ENCODE measurements at regions of chr13 and their contacts with region 1.

Region 1: GRCh38 chr13:113029487-113030258 is 60.7 kb downstream of the MCF2L start:
- DNase-seq: peak in 1 of 2 experiments; percentile 97
- H3K4me3 ChIP-seq: no peak overlapping the region
- H3K27ac ChIP-seq: no peak overlapping the region
- H3K4me1 ChIP-seq: peaks cover 0 to 3% (median 0%) of the 10 kb centered on the region in 4 experiments; a peak in 2 of 7 replicates
- H3K27me3 ChIP-seq: no peaks in the 10 kb centered on the region
- CTCF ChIP-seq: peak in 2 of 3 experiments; percentile 89 to 96; a peak in 3 of 4 replicates
- EP300 ChIP-seq: no peak
- POLR2A ChIP-seq: no peak
- RAD21 ChIP-seq: peak; percentile 85 to 90

Region 2: DNA sequence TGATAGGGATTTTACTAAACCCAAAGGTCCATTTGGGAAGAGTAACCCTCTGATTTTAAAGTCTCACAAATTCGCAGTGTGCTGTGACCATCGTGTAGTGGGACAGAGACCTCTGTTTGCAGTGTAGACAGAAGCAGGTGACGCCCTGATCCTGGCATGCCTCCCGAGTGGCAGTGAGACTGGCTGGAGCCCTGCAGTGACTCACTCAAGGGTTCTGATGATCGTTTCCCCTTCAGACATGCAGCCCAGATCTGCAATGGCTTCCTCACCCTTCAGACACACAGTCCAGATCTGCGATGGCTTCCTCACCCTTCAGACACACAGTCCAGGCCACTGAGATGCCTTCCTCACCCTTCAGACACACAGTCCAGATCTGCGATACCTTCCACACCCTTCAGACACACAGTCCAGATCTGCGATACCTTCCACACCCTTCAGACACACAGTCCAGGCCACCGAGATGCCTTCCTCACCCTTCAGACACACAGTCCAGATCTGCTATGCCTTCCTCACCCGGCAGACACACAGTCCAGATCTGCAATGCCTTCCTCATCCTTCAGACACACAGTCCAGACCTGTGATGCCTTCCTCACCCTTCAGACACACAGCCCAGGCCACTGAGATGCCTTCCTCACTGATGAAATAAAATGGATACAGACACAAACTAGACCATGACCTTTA is 214.6 kb before region 1 on chr13:
- CTCF ChIA-PET with region 1: no interaction called
- POLR2A ChIA-PET with region 1: no interaction called
- DNase-seq: no peak
- H3K4me3 ChIP-seq: no peak overlapping the region
- H3K27ac ChIP-seq: no peak overlapping the region
- H3K4me1 ChIP-seq: no peaks in the 10 kb centered on the region
- H3K27me3 ChIP-seq: no peaks in the 10 kb centered on the region
- CTCF ChIP-seq: no peak
- EP300 ChIP-seq: no peak
- POLR2A ChIP-seq: no peak
- RAD21 ChIP-seq: no peak

Region 3: DNA sequence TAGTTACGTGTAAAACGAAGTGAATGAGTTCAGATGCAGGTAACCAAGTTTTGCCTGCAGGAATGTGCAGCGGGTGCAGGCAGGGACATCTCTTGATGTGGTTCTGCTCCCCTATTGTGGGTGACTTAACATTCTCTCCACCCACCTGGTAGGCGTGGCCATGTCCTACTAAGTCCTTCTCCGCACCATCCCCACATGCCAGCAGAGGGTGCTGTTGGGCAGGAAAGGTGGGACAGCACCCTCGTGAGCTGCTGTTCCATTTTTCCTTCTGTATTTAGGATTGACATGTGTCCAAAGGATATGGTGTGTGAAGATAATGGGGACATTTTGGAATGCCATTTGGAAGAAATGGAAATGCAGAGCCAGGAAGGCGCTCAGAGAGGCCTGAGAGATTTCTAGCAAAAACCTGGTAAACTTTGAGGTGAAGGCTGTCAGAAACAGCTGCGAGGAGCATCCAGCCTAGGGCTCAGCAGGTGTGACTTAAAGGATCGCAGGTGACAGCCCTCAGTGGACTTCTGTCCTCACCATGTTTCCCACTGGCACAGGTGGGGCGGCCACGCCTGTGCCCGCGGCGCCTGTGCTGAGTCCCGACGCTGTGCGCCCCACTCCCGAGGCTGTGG is 86.9 kb before region 1 on chr13:
- CTCF ChIA-PET with region 1: interaction called, 72 read pairs
- POLR2A ChIA-PET with region 1: no interaction called
- DNase-seq: peak; percentile 85 to 99
- H3K4me3 ChIP-seq: peak overlapping the region in 3 of 4 experiments; percentile 43 to 71 (median 56); a peak in 7 of 8 replicates
- H3K27ac ChIP-seq: no peak overlapping the region
- H3K4me1 ChIP-seq: no peaks in the 10 kb centered on the region; a peak in 2 of 7 replicates
- H3K27me3 ChIP-seq: no peaks in the 10 kb centered on the region
- CTCF ChIP-seq: peak; percentile 93 to 99 (median 99)
- EP300 ChIP-seq: no peak
- POLR2A ChIP-seq: no peak
- RAD21 ChIP-seq: peak; percentile 94 to 95

Region 4: GRCh38 chr13:112968908-112969691 is 60.6 kb before region 1 on chr13 and contains the start of gene MCF2L:
- CTCF ChIA-PET with region 1: interaction called, 34 read pairs
- POLR2A ChIA-PET with region 1: no interaction called
- DNase-seq: peak in 1 of 2 experiments; percentile 72
- H3K4me3 ChIP-seq: peak within 1 kb of the TSS; percentile 41 to 73 (median 44)
- H3K27ac ChIP-seq: no peak within 1 kb of the TSS
- H3K4me1 ChIP-seq: peaks cover 0 to 3% (median under 1%) of the 10 kb centered on the region in 4 experiments; a peak in 2 of 7 replicates
- H3K27me3 ChIP-seq: peaks cover 0 to 8% (median 4%) of the 10 kb centered on the region in 4 experiments; a peak in 4 of 7 replicates
- CTCF ChIP-seq: peak in 1 of 3 experiments; percentile 40; a peak in 1 of 4 replicates
- EP300 ChIP-seq: no peak
- POLR2A ChIP-seq: no peak
- RAD21 ChIP-seq: peak; percentile 28 to 35; a peak in 3 of 4 replicates
- total RNA-seq, gene MCF2L: 22.9 and 24.4 TPM in 2 replicates

Region 5: DNA sequence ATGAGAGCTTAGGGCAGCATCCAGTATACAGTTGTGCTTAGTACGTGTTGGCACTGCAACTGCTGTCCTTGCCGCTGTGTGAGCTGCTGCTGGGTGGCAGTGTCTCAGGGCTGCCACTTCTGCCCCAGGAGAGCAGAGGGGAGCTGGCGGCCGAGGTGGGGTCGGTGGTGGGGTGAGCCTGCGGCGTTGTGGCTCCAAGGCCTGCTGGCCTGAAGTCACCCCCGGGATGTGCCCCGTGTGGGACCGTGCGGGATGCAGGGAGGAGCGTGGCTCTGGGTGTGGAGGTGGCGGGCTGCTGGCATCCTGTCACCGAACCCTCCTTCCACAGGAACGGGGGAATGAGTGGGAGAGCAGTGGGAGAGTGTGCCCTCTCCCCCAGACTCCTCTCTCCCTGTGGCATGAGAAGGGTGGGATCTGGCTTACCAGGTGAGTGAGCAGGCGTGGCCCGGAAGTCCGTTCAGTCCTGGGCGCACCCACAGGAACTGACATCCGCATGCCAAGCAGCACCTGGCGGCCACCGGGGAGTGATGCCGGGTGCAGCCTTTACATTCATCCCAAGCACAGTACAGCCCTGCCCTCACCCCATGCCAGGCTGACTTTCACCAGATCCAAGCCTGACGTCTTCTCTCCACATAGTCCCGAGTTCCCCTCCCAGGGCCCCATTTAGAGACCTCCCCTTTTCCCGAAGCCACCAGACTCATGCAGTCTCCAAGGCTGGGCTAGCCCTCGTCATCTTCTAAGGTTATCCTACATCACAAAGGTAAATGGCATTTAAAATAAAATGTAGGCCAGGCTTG is 34.1 kb before region 1 on chr13:
- CTCF ChIA-PET with region 1: interaction called, 21 read pairs
- POLR2A ChIA-PET with region 1: no interaction called
- DNase-seq: no peak
- H3K4me3 ChIP-seq: no peak overlapping the region
- H3K27ac ChIP-seq: no peak overlapping the region
- H3K4me1 ChIP-seq: peaks cover 0 to 2% (median under 1%) of the 10 kb centered on the region in 4 experiments; a peak in 4 of 7 replicates
- H3K27me3 ChIP-seq: no peaks in the 10 kb centered on the region
- CTCF ChIP-seq: no peak
- EP300 ChIP-seq: no peak
- POLR2A ChIP-seq: no peak
- RAD21 ChIP-seq: no peak

Region 6: DNA sequence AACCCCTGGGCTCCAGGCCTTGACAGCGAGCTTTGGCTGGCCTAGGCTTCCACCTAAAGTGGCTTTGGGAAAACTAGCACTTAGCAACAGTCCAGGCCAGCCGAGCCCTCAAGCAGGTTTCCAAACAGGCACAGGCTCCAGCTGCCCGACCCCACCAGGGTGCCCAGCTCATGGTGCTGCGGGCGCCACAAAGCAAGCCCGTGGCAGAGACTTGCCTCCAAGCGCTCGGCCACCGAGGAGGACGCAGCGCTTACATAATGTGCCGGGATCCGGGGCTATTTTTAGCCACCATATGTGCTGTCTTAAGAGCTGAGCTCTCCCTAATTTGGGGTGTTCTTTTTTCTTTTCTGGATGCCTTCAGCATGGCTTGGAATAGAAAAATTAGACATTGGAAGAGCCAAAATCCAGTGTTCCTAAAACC is 19.9 kb after region 1 on chr13:
- CTCF ChIA-PET with region 1: interaction called, 16 read pairs
- POLR2A ChIA-PET with region 1: no interaction called
- DNase-seq: no peak
- H3K4me3 ChIP-seq: no peak overlapping the region
- H3K27ac ChIP-seq: no peak overlapping the region
- H3K4me1 ChIP-seq: peaks cover 0 to 4% (median 3%) of the 10 kb centered on the region in 4 experiments; a peak in 5 of 7 replicates
- H3K27me3 ChIP-seq: no peaks in the 10 kb centered on the region; a peak in 1 of 7 replicates
- CTCF ChIP-seq: no peak
- EP300 ChIP-seq: no peak
- POLR2A ChIP-seq: no peak
- RAD21 ChIP-seq: no peak

Region 7: GRCh38 chr13:113064534-113065405 is 35.1 kb after region 1 on chr13:
- CTCF ChIA-PET with region 1: interaction called, 19 read pairs
- POLR2A ChIA-PET with region 1: no interaction called
- DNase-seq: no peak
- H3K4me3 ChIP-seq: no peak overlapping the region
- H3K27ac ChIP-seq: no peak overlapping the region
- H3K4me1 ChIP-seq: no peaks in the 10 kb centered on the region
- H3K27me3 ChIP-seq: no peaks in the 10 kb centered on the region
- CTCF ChIP-seq: no peak
- EP300 ChIP-seq: no peak
- POLR2A ChIP-seq: no peak
- RAD21 ChIP-seq: no peak